K562 (cell line): ENCODE measurements at regions of chr7 and their contacts with region 1.

Region 1: DNA sequence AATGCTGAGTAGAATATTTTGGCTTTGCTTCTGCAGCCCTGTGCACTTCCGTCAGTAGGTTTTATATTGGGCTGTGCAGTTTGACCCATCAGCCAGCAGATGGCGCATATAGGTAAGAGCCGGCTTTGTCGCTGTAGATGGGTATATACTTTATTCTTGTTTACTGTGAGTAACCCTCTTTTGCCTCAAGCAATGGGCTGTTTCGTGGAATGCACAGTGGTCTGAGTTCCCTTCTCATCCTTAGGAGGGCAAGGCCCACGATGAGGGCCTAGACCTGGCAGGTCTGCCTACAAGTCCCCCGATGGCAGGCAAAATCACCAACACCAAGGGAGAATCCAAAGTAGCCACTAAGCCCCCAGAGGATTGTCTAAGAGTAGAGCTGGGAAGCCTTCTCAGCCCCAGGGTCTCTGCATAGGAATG is 1002.9 kb upstream of the KCND2 start:
- DNase-seq: peak; percentile 42 to 71 (median 47)
- ATAC-seq: peak; percentile 93
- H3K4me3 ChIP-seq: no peak overlapping the region
- H3K27ac ChIP-seq: no peak overlapping the region
- H3K4me1 ChIP-seq: no peaks in the 10 kb centered on the region
- H3K27me3 ChIP-seq: no peaks in the 10 kb centered on the region
- CTCF ChIP-seq: peak; percentile 77 to 86 (median 81)
- EP300 ChIP-seq: no peak
- POLR2A ChIP-seq: no peak
- RAD21 ChIP-seq: peak; percentile 66 to 82

Region 2: DNA sequence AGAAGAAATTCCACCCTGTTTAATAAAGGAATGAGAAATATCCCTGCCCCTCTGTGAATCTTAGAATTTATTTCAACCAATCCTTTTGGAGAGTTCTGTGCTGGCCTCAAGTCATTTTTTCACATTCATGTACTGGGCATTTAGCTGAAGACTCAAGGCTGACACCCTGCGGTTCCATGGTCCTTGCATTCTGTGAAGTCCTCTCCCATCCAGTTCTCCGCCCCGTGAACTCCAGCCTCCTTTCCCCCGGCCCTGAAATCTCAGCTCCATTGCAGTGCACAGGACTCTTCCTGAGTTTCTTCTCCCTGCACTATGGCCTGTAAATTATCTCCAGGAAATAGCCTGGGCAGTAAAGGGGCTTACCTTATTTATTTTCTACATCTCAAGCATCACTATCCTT is 819.9 kb after region 1 on chr7:
- CTCF ChIA-PET with region 1: interaction called, 5 read pairs
- POLR2A ChIA-PET with region 1: no interaction called
- in situ Hi-C with region 1: no loop called
- intact Hi-C with region 1: loop called (anchors 10 kb)
- DNase-seq: peak in 3 of 4 experiments; percentile 15 to 76 (median 51)
- ATAC-seq: peak; percentile 98
- H3K4me3 ChIP-seq: no peak overlapping the region
- H3K27ac ChIP-seq: no peak overlapping the region
- H3K4me1 ChIP-seq: no peaks in the 10 kb centered on the region
- H3K27me3 ChIP-seq: no peaks in the 10 kb centered on the region; a peak in 1 of 5 replicates
- CTCF ChIP-seq: peak; percentile 65 to 72 (median 66)
- EP300 ChIP-seq: no peak
- POLR2A ChIP-seq: no peak
- RAD21 ChIP-seq: peak; percentile 67 to 81

Region 3: DNA sequence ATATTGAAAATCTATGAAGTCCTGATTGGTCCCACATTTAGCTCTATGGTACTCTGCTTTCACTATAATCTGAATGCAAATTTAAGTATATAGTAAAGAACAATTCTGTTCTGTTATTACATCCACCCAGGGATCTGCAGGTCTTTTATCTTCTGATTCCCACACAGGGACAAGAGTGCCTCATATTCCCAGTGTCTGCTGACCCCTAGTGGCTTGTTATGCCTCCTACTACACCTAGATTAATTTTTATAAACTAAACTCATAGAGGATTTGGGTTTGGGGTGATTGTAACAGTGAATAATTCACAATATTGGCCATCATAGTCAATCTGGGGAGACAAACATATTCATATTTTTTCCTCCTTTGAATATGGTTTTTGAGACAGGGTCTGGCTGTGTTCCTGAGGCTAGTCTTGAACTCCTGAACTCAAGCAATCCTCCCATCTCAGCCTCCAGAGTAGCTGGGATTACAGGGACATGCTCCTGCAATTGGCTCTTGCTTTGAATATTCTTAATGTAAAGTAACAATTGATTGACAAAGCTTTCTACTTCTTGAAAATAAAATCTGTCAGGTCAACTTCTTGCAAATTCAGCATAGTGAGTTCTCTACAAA is 1285.0 kb after region 1 on chr7:
- CTCF ChIA-PET with region 1: no interaction called
- POLR2A ChIA-PET with region 1: no interaction called
- in situ Hi-C with region 1: no loop called
- intact Hi-C with region 1: loop called (anchors 1 kb)
- DNase-seq: peak; percentile 45 to 60 (median 50)
- ATAC-seq: peak; percentile 93
- H3K4me3 ChIP-seq: no peak overlapping the region
- H3K27ac ChIP-seq: no peak overlapping the region
- H3K4me1 ChIP-seq: no peaks in the 10 kb centered on the region
- H3K27me3 ChIP-seq: no peaks in the 10 kb centered on the region
- CTCF ChIP-seq: peak; percentile 47 to 68 (median 68); a peak in 5 of 6 replicates
- EP300 ChIP-seq: no peak
- POLR2A ChIP-seq: no peak
- RAD21 ChIP-seq: peak; percentile 61 to 80

Region 4: DNA sequence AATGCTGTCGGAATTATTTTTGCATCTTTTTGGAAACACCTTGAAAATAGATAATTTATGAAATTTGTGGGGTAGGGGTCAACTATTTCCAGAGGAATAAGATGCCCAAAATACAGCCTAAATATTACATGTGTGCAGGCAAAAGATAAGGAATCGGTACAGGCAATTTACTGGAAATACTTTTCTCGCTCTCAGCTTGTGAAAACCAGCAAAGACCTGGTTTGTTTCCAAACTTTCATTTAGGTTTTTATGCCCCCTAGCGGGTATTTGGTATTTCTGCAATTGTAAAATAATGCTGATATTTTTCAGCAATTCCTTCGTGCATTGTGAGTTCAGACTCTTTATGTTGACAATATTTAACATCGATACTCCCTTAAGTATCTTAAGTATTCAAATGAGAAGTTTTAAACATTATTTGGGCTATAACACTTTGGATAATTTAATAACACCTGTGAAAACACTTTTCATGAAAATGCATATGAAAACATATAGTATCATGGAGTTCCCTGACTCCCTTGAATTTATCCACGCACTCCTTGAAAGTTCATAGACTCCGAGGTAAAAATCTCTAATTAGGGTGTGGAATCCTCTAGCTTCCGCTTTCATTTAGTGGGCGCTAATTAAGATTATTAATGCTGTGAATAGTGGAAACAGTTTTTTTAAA is 1455.5 kb after region 1 on chr7:
- CTCF ChIA-PET with region 1: no interaction called
- POLR2A ChIA-PET with region 1: no interaction called
- in situ Hi-C with region 1: no loop called
- intact Hi-C with region 1: loop called (anchors 1 kb)
- DNase-seq: peak; percentile 35 to 58 (median 42)
- ATAC-seq: peak; percentile 78
- H3K4me3 ChIP-seq: no peak overlapping the region
- H3K27ac ChIP-seq: no peak overlapping the region
- H3K4me1 ChIP-seq: no peaks in the 10 kb centered on the region
- H3K27me3 ChIP-seq: no peaks in the 10 kb centered on the region
- CTCF ChIP-seq: peak; percentile 49 to 86 (median 71); a peak in 5 of 6 replicates
- EP300 ChIP-seq: no peak
- POLR2A ChIP-seq: no peak
- RAD21 ChIP-seq: peak; percentile 69 to 84